Posterior vena cava (tissue), 2 donors: ENCODE measurements at regions of chr16 and their contacts with region 1.

Region 1: GRCh38 chr16:27748868-27749546 is 199.1 kb downstream of the KATNIP start:
- DNase-seq: no peak

Region 2: GRCh38 chr16:27446721-27447120 is 302.3 kb before region 1 on chr16:
- intact Hi-C with region 1: no loop called
- DNase-seq: peak; percentile 70

Region 3: DNA sequence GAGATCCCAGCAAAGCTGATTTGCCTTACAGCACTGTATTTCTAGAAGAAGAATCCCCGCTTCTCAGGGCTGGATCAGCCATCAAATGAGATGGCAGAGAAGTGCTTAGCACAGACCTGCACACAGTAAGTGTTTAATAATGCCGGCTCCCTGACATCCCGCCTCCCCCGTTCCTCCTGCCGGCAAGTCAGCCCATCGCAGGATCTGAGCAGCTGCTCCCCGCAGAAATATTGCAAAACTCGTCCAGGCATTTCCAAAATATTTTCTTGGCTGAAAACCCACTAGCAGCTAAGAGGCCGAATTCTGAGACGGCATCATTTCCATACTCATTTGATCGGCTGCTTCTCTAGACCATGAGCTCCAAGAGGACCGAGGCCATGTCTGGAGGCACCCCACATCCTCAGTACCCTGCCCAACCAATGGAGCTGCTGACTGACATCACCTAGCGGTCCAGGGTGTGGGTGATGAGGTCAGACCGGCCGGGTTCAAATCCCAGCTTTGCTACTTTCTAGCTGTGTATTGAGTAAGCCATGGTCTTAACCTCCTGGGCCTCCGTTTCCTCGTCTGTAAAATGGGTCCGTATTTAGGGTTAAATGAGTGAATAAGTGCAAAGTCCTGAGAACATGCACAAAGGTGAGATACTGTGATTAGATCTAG is 52.4 kb after region 1 on chr16:
- intact Hi-C with region 1: loop called in 1 of 2 experiments (anchors 10 kb)
- DNase-seq: no peak